Naive thymus-derived CD4-positive, alpha-beta T cell (primary cell): ENCODE measurements at regions of chr1 and their contacts with region 1.

Region 1: DNA sequence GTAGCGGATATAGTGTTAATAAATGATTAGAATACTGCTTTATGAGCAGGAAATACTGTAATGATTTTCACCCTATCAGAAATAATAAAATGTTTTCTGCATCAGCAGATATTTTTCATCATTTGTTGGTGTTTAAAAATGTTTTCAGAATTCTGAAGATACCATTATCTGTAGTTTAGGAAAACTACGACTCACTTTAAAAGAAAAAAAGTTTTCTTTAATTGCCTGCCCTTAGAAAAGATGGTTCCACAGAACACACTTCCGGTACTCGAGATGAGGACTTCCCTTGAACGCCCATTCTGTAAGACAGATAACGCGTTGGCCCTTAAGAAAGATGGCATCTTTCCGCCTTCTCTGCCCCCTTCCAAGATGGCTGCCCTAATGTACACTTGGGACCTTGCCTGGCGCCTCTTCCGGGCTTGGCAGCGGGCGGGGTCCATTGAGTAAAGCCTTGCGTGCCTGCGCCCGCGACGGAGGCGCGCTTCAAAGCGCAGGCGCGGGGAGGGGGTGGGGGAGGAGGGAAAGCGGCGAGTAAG is at the start of gene SZRD1:
- DNase-seq: peak; percentile 81 to 98 (median 96)
- ATAC-seq: peak; percentile 94
- H3K4me3 ChIP-seq: peak within 1 kb of the TSS; percentile 98
- H3K4me3 Mint-ChIP-seq: peak within 1 kb of the TSS; percentile 93 to 99 (median 96)
- H3K27ac ChIP-seq: peak within 1 kb of the TSS; percentile 99
- H3K27ac Mint-ChIP-seq: peak within 1 kb of the TSS; percentile 90 to 99 (median 97)
- H3K4me1 ChIP-seq: peaks cover 19 to 26% of the 10 kb centered on the region in 2 donors
- H3K4me1 Mint-ChIP-seq: peaks cover 15 to 43% (median 38%) of the 10 kb centered on the region in 7 donors
- H3K27me3 ChIP-seq: no peaks in the 10 kb centered on the region
- H3K27me3 Mint-ChIP-seq: no peaks in the 10 kb centered on the region
- total RNA-seq, gene SZRD1: 81.6 to 163 (median 125) TPM

Region 2: DNA sequence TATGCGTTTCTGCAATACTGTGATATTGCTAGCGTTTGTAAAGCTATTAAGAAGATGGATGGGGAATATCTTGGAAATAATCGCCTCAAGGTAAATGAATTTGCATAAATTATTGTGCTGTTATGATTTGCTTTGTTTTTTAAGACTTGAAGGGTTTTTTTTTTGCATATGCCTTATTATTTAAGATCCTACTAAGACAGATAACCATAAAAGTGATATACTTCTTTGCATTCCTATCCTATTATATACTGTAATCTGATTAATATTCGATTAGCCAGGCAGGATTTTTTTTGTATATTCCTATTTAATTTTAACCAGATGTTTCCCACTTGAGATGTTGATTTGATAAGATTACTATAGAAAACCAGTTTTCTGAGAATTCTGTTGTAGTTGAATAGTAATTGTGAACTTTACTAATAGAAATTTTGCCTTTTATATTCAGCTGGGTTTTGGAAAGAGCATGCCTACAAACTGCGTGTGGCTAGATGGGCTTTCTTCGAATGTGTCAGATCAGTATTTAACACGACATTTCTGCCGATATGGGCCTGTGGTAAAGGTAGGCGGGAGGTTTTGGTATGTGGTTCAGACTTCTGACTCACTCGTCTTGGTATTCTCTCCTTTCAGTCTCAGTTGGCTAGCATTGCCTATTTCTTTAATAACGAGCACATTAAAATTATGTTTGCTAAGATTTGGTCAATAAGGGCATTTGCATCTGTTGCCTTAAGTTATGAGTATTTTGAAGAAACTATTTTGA is 447.7 kb before region 1 on chr1:
- CTCF ChIA-PET with region 1: no interaction called
- POLR2A ChIA-PET with region 1: no interaction called
- intact Hi-C with region 1: no loop called
- DNase-seq: peak in 1 of 9 donors; percentile 74
- ATAC-seq: peak; percentile 68
- H3K4me3 ChIP-seq: no peak overlapping the region
- H3K4me3 Mint-ChIP-seq: peak overlapping the region in 4 of 10 donors; percentile 8 to 76 (median 20)
- H3K27ac ChIP-seq: no peak overlapping the region
- H3K27ac Mint-ChIP-seq: peak overlapping the region in 7 of 9 donors; percentile 16 to 77 (median 33)
- H3K4me1 ChIP-seq: peaks cover 10 to 22% of the 10 kb centered on the region in 2 donors
- H3K4me1 Mint-ChIP-seq: peaks cover 9 to 40% (median 31%) of the 10 kb centered on the region in 7 donors
- H3K27me3 ChIP-seq: no peaks in the 10 kb centered on the region
- H3K27me3 Mint-ChIP-seq: no peaks in the 10 kb centered on the region

Region 3: DNA sequence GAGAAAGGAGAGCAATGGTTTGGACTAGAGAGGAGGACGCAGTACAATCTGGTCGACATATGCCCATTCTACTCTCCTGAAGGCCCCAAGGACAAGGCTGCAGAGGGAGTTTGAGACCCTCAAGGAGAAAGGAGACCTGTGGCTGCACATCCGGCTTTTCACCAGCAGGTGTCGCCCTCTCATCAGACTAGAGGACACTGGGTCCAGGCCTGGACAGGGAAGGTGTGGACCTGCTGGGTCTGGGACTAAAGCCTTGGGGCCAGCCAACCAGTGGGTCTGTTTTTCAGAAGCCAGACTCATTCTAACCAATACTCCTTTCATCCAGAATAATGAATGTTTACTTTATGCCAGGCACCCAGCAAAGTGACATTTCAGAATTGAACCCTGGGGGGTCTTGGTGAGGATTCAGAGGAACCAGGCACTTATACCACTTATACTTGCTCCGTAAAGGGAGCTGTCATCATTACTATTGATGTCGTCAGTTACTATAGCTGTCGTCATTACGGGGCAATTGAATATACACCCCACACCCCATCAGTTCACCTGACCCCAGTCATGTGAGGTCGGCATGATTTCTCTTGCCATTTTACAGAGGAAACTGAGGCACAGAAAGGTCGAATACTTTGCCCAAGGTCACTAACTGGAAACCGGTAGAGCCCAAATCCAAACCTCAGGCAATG is 357.6 kb before region 1 on chr1:
- CTCF ChIA-PET with region 1: interaction called, 3 read pairs
- POLR2A ChIA-PET with region 1: no interaction called
- intact Hi-C with region 1: loop called in 1 of 2 experiments (anchors 1 kb)
- DNase-seq: peak; percentile 33 to 74 (median 54)
- ATAC-seq: peak; percentile 73
- H3K4me3 ChIP-seq: no peak overlapping the region
- H3K4me3 Mint-ChIP-seq: no peak overlapping the region
- H3K27ac ChIP-seq: no peak overlapping the region
- H3K27ac Mint-ChIP-seq: no peak overlapping the region
- H3K4me1 ChIP-seq: peaks cover 0 to 6% of the 10 kb centered on the region in 2 donors
- H3K4me1 Mint-ChIP-seq: peaks cover 0 to 21% (median 5%) of the 10 kb centered on the region in 7 donors
- H3K27me3 ChIP-seq: no peaks in the 10 kb centered on the region
- H3K27me3 Mint-ChIP-seq: peaks cover 0 to 17% (median 0%) of the 10 kb centered on the region in 5 donors

Region 4: DNA sequence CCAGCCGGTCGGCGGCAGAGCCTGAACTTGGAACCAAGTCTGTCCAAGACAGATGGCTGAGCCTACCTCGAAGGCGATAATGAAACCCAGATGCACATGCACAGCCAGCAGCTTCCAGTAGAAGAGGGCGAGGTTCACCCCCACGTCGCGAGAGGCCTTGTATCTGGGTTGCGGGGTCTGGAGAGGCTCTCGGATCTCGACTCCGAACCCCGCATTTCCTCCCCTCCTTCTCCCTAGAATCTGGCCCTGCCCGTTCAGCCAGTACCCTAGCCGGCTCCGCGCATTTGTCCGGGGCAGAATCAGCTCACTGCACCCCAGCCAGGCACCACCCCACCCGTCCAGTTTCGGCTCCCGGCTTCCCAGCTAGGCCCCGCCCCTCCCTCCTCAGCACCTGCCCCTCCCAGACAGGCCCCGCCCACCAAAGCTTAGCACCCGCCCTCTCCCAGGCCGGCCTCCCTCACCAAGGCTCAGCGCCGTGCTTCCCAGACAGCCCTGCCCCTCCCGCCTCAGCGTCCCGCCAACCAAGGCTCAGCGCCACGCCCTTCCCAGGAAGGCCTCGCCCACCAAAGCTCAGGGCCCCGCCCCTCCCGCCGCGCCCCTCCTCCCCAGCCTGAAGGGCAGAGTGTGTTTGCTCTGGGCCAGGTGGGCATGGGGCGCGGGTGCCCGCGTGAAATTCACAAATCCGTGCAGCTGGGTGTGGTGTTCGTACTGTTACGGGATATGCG is 149.6 kb before region 1 on chr1:
- CTCF ChIA-PET with region 1: no interaction called
- POLR2A ChIA-PET with region 1: no interaction called
- intact Hi-C with region 1: loop called in 1 of 2 experiments (anchors 1 kb)
- DNase-seq: peak; percentile 80 to 94 (median 89)
- ATAC-seq: peak; percentile 99
- H3K4me3 ChIP-seq: peak overlapping the region; percentile 67
- H3K4me3 Mint-ChIP-seq: peak overlapping the region; percentile 81 to 91 (median 88)
- H3K27ac ChIP-seq: peak overlapping the region; percentile 54
- H3K27ac Mint-ChIP-seq: peak overlapping the region in 8 of 9 donors; percentile 33 to 82 (median 68)
- H3K4me1 ChIP-seq: peaks cover 0 to 6% of the 10 kb centered on the region in 2 donors
- H3K4me1 Mint-ChIP-seq: peaks cover 9 to 30% (median 23%) of the 10 kb centered on the region in 7 donors
- H3K27me3 ChIP-seq: no peaks in the 10 kb centered on the region
- H3K27me3 Mint-ChIP-seq: peaks cover 0 to 11% (median 0%) of the 10 kb centered on the region in 5 donors

Region 5: DNA sequence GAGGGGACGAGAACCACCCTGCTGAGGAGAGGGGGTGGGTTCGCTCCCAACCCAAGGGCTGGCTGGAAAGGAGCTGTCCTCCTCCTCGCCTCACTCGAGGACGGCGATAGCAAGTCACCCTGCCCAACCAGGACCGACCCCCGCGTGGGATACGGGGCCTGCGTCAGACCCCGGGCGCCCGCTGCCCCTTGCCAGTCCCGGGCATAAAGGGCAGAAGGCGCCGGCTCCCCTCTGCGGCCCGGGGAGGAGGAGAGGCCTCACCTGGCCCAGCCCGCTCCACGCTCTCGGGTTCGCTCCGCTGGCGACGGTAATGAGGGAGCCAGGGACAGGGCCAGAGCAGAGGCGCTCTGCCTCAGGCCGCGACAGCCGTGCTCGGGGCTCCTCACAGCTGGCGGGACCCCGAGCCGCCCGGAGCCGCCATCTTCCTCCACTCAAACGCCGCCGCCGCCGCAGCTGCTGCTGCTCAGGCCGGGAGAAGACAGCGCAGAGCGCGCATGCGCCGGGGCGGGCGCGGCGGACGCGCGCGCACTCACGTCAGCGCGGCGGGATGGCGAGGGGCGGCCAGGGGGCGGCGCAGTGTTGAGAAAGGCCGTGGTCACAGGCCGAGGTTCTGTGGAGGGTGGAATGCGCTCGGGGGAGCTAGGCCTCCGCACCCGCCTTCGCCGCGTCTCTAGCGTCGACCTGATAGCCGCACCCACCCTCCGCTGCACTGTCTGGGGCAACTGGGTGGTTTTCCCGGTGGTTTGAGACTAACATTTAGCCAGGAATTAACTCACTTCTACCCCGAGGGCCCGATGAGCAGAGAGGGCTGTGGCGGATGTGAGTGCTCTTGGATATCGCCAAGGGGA is 14.6 kb before region 1 on chr1 and contains the start of gene FBXO42:
- CTCF ChIA-PET with region 1: interaction called, 24 read pairs
- POLR2A ChIA-PET with region 1: interaction called, 29 read pairs
- intact Hi-C with region 1: loop called (anchors 1 kb)
- DNase-seq: peak; percentile 88 to 96 (median 94)
- ATAC-seq: peak; percentile 95
- H3K4me3 ChIP-seq: peak within 1 kb of the TSS; percentile 71
- H3K4me3 Mint-ChIP-seq: peak within 1 kb of the TSS; percentile 84 to 98 (median 94)
- H3K27ac ChIP-seq: peak within 1 kb of the TSS; percentile 97
- H3K27ac Mint-ChIP-seq: peak within 1 kb of the TSS; percentile 69 to 98 (median 94)
- H3K4me1 ChIP-seq: peaks cover 10 to 24% of the 10 kb centered on the region in 2 donors
- H3K4me1 Mint-ChIP-seq: peaks cover 17 to 44% (median 34%) of the 10 kb centered on the region in 7 donors
- H3K27me3 ChIP-seq: no peaks in the 10 kb centered on the region
- H3K27me3 Mint-ChIP-seq: no peaks in the 10 kb centered on the region
- total RNA-seq, gene FBXO42: 18.7 to 25.7 (median 24.6) TPM

Region 6: DNA sequence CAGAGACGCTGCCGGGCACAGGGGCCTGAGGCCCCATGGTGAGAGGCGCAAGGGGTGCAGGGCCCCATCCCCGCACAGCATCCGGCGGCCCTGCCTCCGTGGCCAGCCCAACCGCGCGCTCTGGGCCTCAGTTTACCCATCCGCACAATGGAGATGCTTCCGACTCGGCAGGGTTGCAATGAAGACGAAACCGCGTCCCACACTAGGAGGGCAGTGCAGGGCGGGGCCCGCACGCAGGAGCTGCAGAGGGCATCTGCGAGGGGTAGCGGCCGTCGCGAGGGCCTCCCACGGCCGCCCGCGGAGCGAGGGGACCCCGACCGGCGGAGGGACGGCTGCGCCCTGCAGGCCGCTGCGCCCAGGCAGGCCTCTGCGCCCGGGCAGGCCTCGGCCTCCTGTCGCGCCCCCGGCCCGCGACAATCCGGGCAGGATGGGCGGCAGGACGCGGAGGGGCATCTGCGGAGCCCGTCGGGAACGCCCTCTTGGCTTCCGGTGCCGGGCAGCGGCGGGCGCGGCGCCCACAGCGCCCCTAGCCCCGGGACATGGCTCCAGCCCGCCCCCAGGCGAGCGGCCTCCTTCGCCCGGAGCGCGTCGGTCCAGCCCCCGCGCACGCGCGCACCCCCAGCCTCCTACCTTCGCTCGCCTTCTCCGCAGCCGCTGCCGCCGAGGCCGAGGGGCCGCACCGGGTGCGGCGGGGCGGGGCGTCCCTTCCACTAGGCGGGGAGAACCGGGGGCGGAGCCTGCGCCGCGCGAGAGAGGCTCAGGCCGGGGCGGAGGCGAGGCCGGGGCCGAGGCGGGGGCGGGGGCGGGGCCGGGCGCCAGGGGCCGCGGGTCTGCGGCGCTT is 132.0 kb after region 1 on chr1:
- CTCF ChIA-PET with region 1: no interaction called
- POLR2A ChIA-PET with region 1: no interaction called
- intact Hi-C with region 1: loop called (anchors 1 to 5 kb)
- DNase-seq: peak; percentile 64 to 91 (median 74)
- ATAC-seq: peak; percentile 94
- H3K4me3 ChIP-seq: peak overlapping the region; percentile 83
- H3K4me3 Mint-ChIP-seq: peak overlapping the region; percentile 83 to 95 (median 88)
- H3K27ac ChIP-seq: peak overlapping the region; percentile 56
- H3K27ac Mint-ChIP-seq: peak overlapping the region in 6 of 9 donors; percentile 38 to 85 (median 78)
- H3K4me1 ChIP-seq: no peaks in the 10 kb centered on the region
- H3K4me1 Mint-ChIP-seq: peaks cover 9 to 27% (median 20%) of the 10 kb centered on the region in 7 donors
- H3K27me3 ChIP-seq: no peaks in the 10 kb centered on the region
- H3K27me3 Mint-ChIP-seq: peaks cover 0 to 9% (median 0%) of the 10 kb centered on the region in 5 donors

Region 7: GRCh38 chr1:17053685-17054410 is 687.1 kb after region 1 on chr1 and contains the start of gene SDHB:
- CTCF ChIA-PET with region 1: no interaction called
- POLR2A ChIA-PET with region 1: no interaction called
- intact Hi-C with region 1: loop called in 1 of 2 experiments (anchors 10 kb)
- DNase-seq: peak; percentile 97 to 100 (median 100)
- ATAC-seq: peak; percentile 99
- H3K4me3 ChIP-seq: peak within 1 kb of the TSS; percentile 77
- H3K4me3 Mint-ChIP-seq: peak within 1 kb of the TSS; percentile 87 to 99 (median 98)
- H3K27ac ChIP-seq: peak within 1 kb of the TSS; percentile 81
- H3K27ac Mint-ChIP-seq: peak within 1 kb of the TSS; percentile 94 to 99 (median 97)
- H3K4me1 ChIP-seq: peaks cover 13 to 14% of the 10 kb centered on the region in 2 donors
- H3K4me1 Mint-ChIP-seq: peaks cover 8 to 39% (median 33%) of the 10 kb centered on the region in 7 donors
- H3K27me3 ChIP-seq: no peaks in the 10 kb centered on the region
- H3K27me3 Mint-ChIP-seq: peaks cover 0 to 7% (median 6%) of the 10 kb centered on the region in 5 donors
- total RNA-seq, gene SDHB: 53.3 to 81.3 (median 61.1) TPM